ENCODE measurements at regions of chr15 and their contacts with region 1.

Region 1: GRCh38 chr15:69058830-69059556 is 44.5 kb downstream of the NOX5 start:
- DNase-seq: peak; percentile 92
- ATAC-seq: peak; percentile 83
- H3K4me3 Mint-ChIP-seq: no peak overlapping the region
- H3K27ac Mint-ChIP-seq: no peak overlapping the region
- H3K4me1 Mint-ChIP-seq: peaks cover 15% of the 10 kb centered on the region
- H3K27me3 Mint-ChIP-seq: peaks cover 7% of the 10 kb centered on the region; the same call in 1 of the 2 replicates
- CTCF ChIP-seq: peak; percentile 80

Region 2: GRCh38 chr15:69141286-69141701 is 82.3 kb after region 1 on chr15:
- CTCF ChIA-PET with region 1: interaction called, 17 read pairs
- POLR2A ChIA-PET with region 1: no interaction called
- DNase-seq: no peak
- ATAC-seq: no peak
- H3K4me3 Mint-ChIP-seq: no peak overlapping the region
- H3K27ac Mint-ChIP-seq: no peak overlapping the region
- H3K4me1 Mint-ChIP-seq: peaks cover 14% of the 10 kb centered on the region
- H3K27me3 Mint-ChIP-seq: peaks cover 11% of the 10 kb centered on the region
- CTCF ChIP-seq: no peak

Region 3: DNA sequence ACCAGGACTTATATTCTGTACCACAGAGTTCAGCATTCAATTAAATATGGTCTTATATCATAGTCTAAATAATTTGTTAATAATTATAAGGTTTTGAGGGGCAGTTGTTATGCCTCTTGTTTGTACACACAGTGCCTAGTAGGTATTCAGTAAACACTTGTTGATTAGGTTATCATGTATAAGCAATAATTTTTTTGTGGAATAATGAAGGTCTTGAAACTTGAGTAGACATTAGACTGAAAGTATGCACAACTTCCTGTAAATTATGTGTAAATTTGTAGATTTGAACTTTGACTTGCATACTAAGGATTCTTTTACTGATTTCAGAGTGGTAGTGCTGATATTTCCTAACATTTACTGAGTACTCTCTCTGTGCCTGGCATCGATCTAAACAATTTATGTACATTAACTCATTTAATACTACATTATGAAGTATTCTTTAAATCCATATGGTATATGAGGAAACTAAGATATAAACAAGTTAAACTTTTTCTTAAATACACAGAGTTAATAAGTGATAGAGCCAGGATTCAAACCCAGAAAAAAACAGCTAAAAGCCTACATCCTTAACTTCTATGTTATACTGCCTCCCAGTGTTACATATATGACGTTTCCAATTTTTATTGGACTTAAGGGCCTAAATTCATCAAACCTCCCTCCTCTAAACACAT is 166.5 kb after region 1 on chr15:
- CTCF ChIA-PET with region 1: interaction called, 29 read pairs
- POLR2A ChIA-PET with region 1: no interaction called
- DNase-seq: no peak
- ATAC-seq: 0 out of 2 replicates have a peak, but pooled peaks have one; percentile 38
- H3K4me3 Mint-ChIP-seq: no peak overlapping the region
- H3K27ac Mint-ChIP-seq: no peak overlapping the region
- H3K4me1 Mint-ChIP-seq: peaks cover 15% of the 10 kb centered on the region
- H3K27me3 Mint-ChIP-seq: no peaks in the 10 kb centered on the region
- CTCF ChIP-seq: no peak

Region 4: DNA sequence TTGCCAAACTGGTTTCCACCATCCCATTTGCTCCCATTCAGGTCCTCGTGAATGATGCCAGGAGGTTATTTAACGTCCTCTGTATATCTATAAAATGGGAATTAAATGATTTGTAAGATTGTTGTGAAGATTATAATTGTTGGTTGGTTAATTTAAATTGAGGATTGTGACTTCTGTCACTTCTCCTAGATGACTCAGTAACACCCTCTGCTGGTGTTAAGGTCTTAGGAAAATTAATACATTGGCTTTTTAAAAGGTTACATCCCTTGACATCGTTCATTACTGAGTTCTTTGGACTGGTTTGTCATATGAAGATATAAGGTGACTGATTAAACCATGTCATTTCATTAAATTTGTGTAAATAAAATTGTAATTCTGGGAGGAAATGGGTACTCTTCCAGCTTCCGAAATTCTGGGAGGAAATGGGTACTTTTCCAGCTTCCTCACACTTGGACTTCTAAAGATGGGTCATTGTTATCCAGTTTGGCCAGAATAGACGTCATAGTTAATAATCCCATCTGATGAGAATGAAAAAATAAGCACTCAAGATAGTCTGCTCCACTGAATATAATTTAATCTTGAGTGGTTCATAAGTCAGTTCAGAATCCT is 206.5 kb after region 1 on chr15:
- CTCF ChIA-PET with region 1: interaction called, 15 read pairs
- POLR2A ChIA-PET with region 1: no interaction called
- DNase-seq: no peak
- ATAC-seq: no peak
- H3K4me3 Mint-ChIP-seq: no peak overlapping the region
- H3K27ac Mint-ChIP-seq: no peak overlapping the region
- H3K4me1 Mint-ChIP-seq: peaks cover under 1% of the 10 kb centered on the region
- H3K27me3 Mint-ChIP-seq: no peaks in the 10 kb centered on the region
- CTCF ChIP-seq: no peak

Region 5: DNA sequence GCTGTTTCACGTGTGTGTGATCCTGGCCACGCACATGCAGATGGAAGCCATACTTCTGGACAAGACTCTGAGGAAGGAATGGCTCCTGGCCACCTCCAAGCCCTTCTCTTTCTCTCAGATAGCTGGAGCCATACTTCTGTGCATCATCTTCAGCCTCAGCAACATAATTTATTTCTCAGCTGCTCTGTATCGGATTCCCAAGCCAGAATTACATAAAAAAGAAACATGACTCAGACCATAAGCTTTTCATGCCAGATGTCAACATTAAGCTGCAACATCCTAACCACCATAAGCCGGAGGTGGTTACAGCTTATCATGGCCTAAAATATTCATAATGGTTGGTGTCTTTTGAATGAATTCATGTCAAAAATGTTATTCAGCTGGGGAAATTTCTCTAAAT is 344.6 kb after region 1 on chr15:
- CTCF ChIA-PET with region 1: no interaction called
- POLR2A ChIA-PET with region 1: no interaction called
- DNase-seq: no peak
- ATAC-seq: no peak
- H3K4me3 Mint-ChIP-seq: no peak overlapping the region
- H3K27ac Mint-ChIP-seq: no peak overlapping the region
- H3K4me1 Mint-ChIP-seq: no peaks in the 10 kb centered on the region
- H3K27me3 Mint-ChIP-seq: no peaks in the 10 kb centered on the region
- CTCF ChIP-seq: no peak

Measured in WTC11 (cell line).